Transverse colon (tissue), 4 donors: ENCODE measurements at regions of chr4 and their contacts with region 1.

Region 1: GRCh38 chr4:174373821-174374220 is 90.1 kb downstream of the CEP44 start:
- DNase-seq: no peak
- H3K4me3 ChIP-seq: no peak overlapping the region
- H3K27ac ChIP-seq: no peak overlapping the region
- H3K4me1 ChIP-seq: no peaks in the 10 kb centered on the region
- H3K27me3 ChIP-seq: no peaks in the 10 kb centered on the region
- CTCF ChIP-seq: no peak
- EP300 ChIP-seq: no peak
- POLR2A ChIP-seq: no peak

Region 2: DNA sequence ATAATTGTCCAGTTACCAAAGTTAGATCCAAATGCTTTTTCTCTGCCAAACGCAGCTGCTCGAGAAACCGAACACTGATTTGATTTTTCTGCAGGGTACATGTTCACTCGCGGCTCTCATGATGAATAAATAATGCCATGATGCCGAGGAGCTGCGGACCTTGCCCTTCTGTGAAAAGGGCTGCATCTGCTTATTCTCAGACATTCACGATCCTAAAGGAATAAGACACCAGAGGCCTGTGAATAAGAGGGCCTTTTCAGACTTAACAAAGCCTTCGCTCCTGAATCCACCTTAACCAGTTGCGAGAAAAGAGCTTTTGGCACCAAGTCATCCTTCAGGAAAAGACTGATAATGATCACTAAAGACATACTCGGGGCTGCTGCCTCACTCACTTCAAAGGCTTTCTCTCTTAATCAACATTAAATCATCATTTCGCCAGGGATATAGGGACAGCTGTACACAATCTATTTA is 237.8 kb before region 1 on chr4:
- in situ Hi-C with region 1: no loop called
- intact Hi-C with region 1: no loop called
- DNase-seq: no peak
- H3K4me3 ChIP-seq: peak overlapping the region in 3 of 4 donors; percentile 4 to 18 (median 5)
- H3K27ac ChIP-seq: peak overlapping the region; percentile 12 to 74 (median 58)
- H3K4me1 ChIP-seq: no peaks in the 10 kb centered on the region
- H3K27me3 ChIP-seq: no peaks in the 10 kb centered on the region
- CTCF ChIP-seq: no peak
- EP300 ChIP-seq: no peak
- POLR2A ChIP-seq: no peak

Region 3: GRCh38 chr4:174631901-174632758 is 258.3 kb after region 1 on chr4:
- in situ Hi-C with region 1: loop called (anchors 5 to 10 kb)
- intact Hi-C with region 1: loop called (anchors 10 kb)
- DNase-seq: no peak
- H3K4me3 ChIP-seq: no peak overlapping the region
- H3K27ac ChIP-seq: no peak overlapping the region
- H3K4me1 ChIP-seq: peaks cover 0 to 11% (median 2%) of the 10 kb centered on the region in 4 donors
- H3K27me3 ChIP-seq: no peaks in the 10 kb centered on the region
- CTCF ChIP-seq: peak; percentile 72 to 82 (median 76)
- EP300 ChIP-seq: no peak
- POLR2A ChIP-seq: no peak